ENCODE measurements at regions of chr15 and their contacts with region 1.

Region 1: GRCh38 chr15:58469432-58470353 is 37.9 kb downstream of the LIPC start:
- DNase-seq: no peak
- H3K4me3 Mint-ChIP-seq: no peak overlapping the region
- H3K27ac Mint-ChIP-seq: no peak overlapping the region
- H3K4me1 Mint-ChIP-seq: peaks cover 42% of the 10 kb centered on the region
- H3K27me3 Mint-ChIP-seq: no peaks in the 10 kb centered on the region

Region 2: GRCh38 chr15:58260911-58261267 is 208.8 kb before region 1 on chr15:
- CTCF ChIA-PET with region 1: no interaction called
- intact Hi-C with region 1: no loop called
- DNase-seq: no peak
- H3K4me3 Mint-ChIP-seq: no peak overlapping the region
- H3K27ac Mint-ChIP-seq: no peak overlapping the region
- H3K4me1 Mint-ChIP-seq: peaks cover 3% of the 10 kb centered on the region
- H3K27me3 Mint-ChIP-seq: no peaks in the 10 kb centered on the region

Region 3: DNA sequence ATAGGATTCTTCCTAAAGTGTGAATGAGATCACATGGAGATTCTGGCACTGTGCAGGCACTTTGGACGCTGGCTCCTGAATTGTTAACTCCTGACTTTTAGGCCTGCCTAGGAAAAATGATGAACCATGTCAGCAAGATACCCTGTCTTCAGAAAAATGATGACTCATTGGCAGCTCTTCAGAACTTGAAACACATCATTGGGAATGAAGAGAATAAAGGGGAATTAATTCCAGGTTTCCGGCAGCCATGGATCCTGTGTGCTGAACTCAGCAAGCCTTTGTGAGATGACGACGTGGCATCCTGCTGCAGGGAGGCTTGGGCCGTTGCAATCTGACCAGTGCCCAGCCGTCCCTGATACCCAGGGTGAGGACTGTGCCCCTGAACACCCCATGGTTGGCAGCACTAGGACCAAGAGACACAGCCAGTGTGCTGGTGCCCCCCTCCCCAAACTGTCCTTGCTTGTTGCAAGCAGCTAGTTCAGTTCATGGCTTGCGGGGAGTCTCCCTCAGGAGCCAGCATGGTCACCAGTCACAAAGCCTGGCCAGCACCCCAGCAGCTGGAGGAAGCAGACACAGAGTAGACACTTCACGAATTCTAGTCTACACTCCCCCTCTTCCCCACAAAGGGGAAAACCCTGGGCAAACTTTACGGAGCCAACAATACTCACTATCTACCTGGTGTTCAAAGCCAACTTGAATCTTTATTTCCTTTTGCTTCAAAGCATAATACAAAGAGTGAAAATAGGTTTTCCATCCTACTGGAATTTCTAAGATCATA is 45.7 kb before region 1 on chr15:
- CTCF ChIA-PET with region 1: no interaction called
- intact Hi-C with region 1: loop called (anchors 5 kb)
- DNase-seq: peak; percentile 44
- H3K4me3 Mint-ChIP-seq: no peak overlapping the region
- H3K27ac Mint-ChIP-seq: no peak overlapping the region
- H3K4me1 Mint-ChIP-seq: peaks cover 20% of the 10 kb centered on the region
- H3K27me3 Mint-ChIP-seq: no peaks in the 10 kb centered on the region

Region 4: GRCh38 chr15:58457381-58457965 is 12.2 kb before region 1 on chr15:
- CTCF ChIA-PET with region 1: interaction called, 3 read pairs
- intact Hi-C with region 1: loop called (anchors 1 kb)
- DNase-seq: peak; percentile 34
- H3K4me3 Mint-ChIP-seq: no peak overlapping the region
- H3K27ac Mint-ChIP-seq: no peak overlapping the region
- H3K4me1 Mint-ChIP-seq: peaks cover 58% of the 10 kb centered on the region
- H3K27me3 Mint-ChIP-seq: no peaks in the 10 kb centered on the region

Region 5: DNA sequence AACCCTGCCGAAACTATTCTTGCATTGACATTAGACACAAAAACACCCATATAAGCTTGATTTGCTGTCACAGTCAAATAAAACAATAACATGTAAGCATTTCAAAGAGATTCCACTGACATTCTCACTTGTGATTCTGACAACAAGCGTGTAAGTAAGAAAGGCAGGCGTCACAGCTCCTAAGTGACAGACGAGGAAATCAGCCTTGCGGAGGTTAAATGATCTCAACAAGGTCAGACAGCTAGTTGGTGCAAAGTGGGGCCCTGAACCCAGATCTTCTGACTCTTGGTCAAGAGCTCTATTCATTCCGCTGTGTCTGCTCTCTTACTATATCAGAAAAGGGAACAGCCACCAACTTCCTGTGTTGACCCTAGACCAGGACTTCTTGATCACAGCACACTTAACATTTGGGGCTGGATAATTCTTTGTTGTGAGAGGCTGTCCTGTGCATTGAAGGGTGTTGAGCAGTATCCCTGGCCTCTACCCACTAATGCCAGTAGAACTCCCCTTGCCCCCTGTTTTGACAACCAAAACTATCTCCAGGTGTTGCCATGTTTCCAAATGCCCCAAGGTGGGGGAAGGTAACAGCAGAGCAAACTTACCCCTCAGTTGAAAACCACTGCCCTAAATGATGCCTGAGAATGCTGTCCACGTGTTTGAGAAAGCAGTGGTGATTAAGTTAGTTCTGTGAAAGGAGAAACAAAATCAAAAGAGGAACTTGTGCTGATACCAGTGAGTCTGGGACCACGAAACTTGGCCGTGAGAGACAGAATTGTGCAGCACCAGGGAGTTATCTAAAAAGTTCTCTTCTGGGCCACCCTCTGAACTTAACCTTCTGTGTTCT is 48.2 kb after region 1 on chr15:
- CTCF ChIA-PET with region 1: interaction called, 5 read pairs
- intact Hi-C with region 1: loop called (anchors 2 kb)
- DNase-seq: peak; percentile 38
- H3K4me3 Mint-ChIP-seq: no peak overlapping the region
- H3K27ac Mint-ChIP-seq: peak overlapping the region; percentile 43
- H3K4me1 Mint-ChIP-seq: peaks cover 62% of the 10 kb centered on the region
- H3K27me3 Mint-ChIP-seq: no peaks in the 10 kb centered on the region

Measured in activated naive CD4-positive, alpha-beta T cell treated with anti-CD3 and anti-CD28 coated beads for 36 hours (primary cell).